Activated CD4-positive, alpha-beta memory T cell treated with anti-CD3 and anti-CD28 coated beads for 36 hours (primary cell): ENCODE measurements at regions of chr18 and their contacts with region 1.

Region 1: GRCh38 chr18:41954827-41955613 is at the start of gene PIK3C3:
- DNase-seq: peak; percentile 98
- H3K4me3 Mint-ChIP-seq: peak within 1 kb of the TSS; percentile 100
- H3K27ac Mint-ChIP-seq: peak within 1 kb of the TSS; percentile 97
- H3K4me1 Mint-ChIP-seq: peaks cover 34% of the 10 kb centered on the region
- H3K27me3 Mint-ChIP-seq: peaks cover 1% of the 10 kb centered on the region
- total RNA-seq, gene PIK3C3: 46.8 to 49.5 TPM

Region 2: DNA sequence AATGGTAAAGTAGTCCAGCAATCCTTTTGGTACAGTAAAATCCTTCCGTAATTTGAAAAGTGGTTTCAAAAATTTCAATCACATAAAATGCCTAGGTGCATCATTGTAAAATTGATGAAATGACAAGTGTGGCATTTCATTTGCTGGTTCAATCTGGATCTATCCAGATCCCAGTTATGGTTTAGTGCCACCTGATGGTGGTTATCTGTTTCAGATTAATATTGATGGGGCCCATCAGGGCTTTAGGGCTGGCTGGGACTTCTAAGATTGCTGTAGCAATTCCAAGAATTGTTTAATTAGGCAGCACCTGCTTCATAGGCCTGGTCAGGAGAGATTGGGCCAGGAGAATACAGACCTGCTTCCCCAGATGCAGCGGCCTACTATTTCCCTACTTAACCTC is 55.5 kb before region 1 on chr18:
- CTCF ChIA-PET with region 1: no interaction called
- POLR2A ChIA-PET with region 1: no interaction called
- intact Hi-C with region 1: no loop called
- DNase-seq: no peak
- H3K4me3 Mint-ChIP-seq: no peak overlapping the region
- H3K27ac Mint-ChIP-seq: no peak overlapping the region
- H3K4me1 Mint-ChIP-seq: no peaks in the 10 kb centered on the region
- H3K27me3 Mint-ChIP-seq: peaks cover 4% of the 10 kb centered on the region

Region 3: GRCh38 chr18:41972067-41972925 is 17.3 kb after region 1 on chr18:
- CTCF ChIA-PET with region 1: no interaction called
- POLR2A ChIA-PET with region 1: interaction called, 7 read pairs
- intact Hi-C with region 1: loop called (anchors 1 kb)
- DNase-seq: no peak
- H3K4me3 Mint-ChIP-seq: no peak overlapping the region
- H3K27ac Mint-ChIP-seq: no peak overlapping the region
- H3K4me1 Mint-ChIP-seq: peaks cover 31% of the 10 kb centered on the region
- H3K27me3 Mint-ChIP-seq: no peaks in the 10 kb centered on the region